Sigmoid colon (tissue), 7 donors: ENCODE measurements at regions of chr11 and their contacts with region 1.

Region 1: GRCh38 chr11:2778630-2779498 is 79.1 kb upstream of the KCNQ1OT1 start:
- DNase-seq: peak; percentile 93
- H3K4me3 ChIP-seq: peak overlapping the region in 3 of 4 donors; percentile 9 to 24 (median 12)
- H3K27ac ChIP-seq: peak overlapping the region; percentile 79 to 90 (median 84)
- H3K4me1 ChIP-seq: peaks cover 0 to 32% (median 31%) of the 10 kb centered on the region in 4 donors
- H3K27me3 ChIP-seq: no peaks in the 10 kb centered on the region
- CTCF ChIP-seq: peak in 3 of 4 experiments; percentile 30 to 53 (median 45)
- EP300 ChIP-seq: peak in 1 of 4 donors; percentile 71
- POLR2A ChIP-seq: no peak

Region 2: DNA sequence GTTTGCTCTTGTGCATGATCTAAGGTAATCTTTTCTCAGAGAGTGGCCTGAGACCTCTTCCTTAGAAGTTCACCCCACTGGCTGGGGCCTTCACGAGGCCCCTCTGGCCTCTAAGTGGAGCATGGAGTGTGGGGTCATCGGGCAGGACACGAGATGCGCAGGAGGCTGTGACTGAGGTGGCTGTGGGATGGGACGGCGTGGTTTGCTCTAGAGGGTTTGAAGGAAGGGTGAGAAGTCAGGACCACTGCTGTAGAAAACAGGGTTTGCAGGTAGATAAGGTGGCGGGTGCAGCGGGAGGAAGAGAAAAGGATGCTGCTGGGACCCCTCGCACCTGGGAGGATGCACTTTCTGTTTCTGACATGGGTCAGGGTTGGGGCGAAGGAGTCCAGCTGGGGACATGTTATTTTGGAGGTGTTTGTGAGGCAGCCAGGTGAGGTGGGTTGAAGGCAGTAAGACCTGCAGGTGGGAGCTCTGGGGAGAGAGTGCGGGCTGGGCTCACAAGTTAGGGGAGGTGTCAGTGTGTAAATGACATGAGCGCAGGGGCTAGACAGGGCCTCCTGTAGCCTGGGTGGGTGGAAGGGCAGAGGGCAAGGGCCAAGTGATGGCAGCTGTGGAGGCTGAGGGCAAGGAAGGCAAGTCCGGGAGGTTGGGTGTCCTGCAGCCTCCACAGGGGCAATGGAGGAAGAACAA is 271.5 kb before region 1 on chr11:
- intact Hi-C with region 1: no loop called
- DNase-seq: peak; percentile 52
- H3K4me3 ChIP-seq: no peak overlapping the region
- H3K27ac ChIP-seq: no peak overlapping the region
- H3K4me1 ChIP-seq: no peaks in the 10 kb centered on the region
- H3K27me3 ChIP-seq: peaks cover 0 to 8% (median 0%) of the 10 kb centered on the region in 3 donors
- CTCF ChIP-seq: no peak
- EP300 ChIP-seq: no peak
- POLR2A ChIP-seq: no peak

Region 3: GRCh38 chr11:2664791-2665525 is 113.9 kb before region 1 on chr11:
- intact Hi-C with region 1: no loop called
- DNase-seq: peak; percentile 53
- H3K4me3 ChIP-seq: no peak overlapping the region
- H3K27ac ChIP-seq: no peak overlapping the region
- H3K4me1 ChIP-seq: peaks cover 0 to 16% (median 7%) of the 10 kb centered on the region in 4 donors
- H3K27me3 ChIP-seq: no peaks in the 10 kb centered on the region
- CTCF ChIP-seq: no peak
- EP300 ChIP-seq: no peak
- POLR2A ChIP-seq: no peak

Region 4: DNA sequence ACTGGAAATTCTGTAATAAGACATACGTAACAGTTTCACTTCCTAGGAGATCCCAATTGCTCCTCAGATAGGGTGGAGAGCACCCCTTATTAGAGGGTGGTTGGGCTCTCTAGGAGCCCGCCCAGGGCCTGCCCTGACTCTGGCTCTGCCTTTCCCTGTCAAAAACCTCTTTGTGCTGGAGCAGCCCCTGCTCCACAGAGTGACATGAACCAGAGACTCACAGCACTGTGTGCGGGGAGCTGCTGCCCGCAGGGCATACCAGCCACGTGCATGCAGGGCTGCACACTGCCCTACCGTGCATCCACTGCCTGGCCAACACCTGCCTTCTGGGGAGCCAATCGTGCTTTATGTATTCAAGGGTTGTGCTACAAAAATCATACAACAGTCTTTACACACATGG is 103.3 kb before region 1 on chr11:
- intact Hi-C with region 1: loop called (anchors 2 kb)
- DNase-seq: peak; percentile 77
- H3K4me3 ChIP-seq: no peak overlapping the region
- H3K27ac ChIP-seq: peak overlapping the region; percentile 8 to 85 (median 72)
- H3K4me1 ChIP-seq: peaks cover 0 to 42% (median 35%) of the 10 kb centered on the region in 4 donors
- H3K27me3 ChIP-seq: no peaks in the 10 kb centered on the region
- CTCF ChIP-seq: no peak
- EP300 ChIP-seq: no peak
- POLR2A ChIP-seq: no peak

Region 5: DNA sequence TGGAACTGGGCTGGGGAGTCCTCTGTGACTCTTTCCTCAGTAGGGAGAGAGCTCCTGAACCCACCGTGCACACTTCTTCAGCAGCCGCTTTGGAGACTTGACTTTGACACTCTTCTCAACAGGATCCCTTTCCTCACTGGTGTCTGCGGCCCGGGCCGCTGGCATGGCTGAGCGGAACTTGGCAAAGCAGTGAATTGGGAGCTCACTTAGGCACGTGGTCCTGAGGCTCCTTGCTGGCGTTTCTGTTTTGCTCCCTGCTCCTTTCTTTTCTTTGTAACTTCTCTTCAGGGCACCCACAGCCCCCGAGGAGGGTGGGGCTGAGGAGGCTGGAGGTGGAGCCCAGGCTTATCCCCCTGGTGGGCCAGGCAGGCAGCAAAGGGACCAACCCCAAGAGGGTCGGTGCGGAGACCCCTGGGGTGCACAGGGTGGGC is 70.7 kb before region 1 on chr11:
- intact Hi-C with region 1: loop called (anchors 2 kb)
- DNase-seq: peak; percentile 87
- H3K4me3 ChIP-seq: peak overlapping the region in 3 of 4 donors; percentile 18 to 28 (median 28)
- H3K27ac ChIP-seq: peak overlapping the region; percentile 78 to 87 (median 84)
- H3K4me1 ChIP-seq: peaks cover 0 to 35% (median 26%) of the 10 kb centered on the region in 4 donors
- H3K27me3 ChIP-seq: no peaks in the 10 kb centered on the region
- CTCF ChIP-seq: no peak
- EP300 ChIP-seq: no peak
- POLR2A ChIP-seq: no peak